Right ventricle myocardium inferior (tissue), 1 donor: ENCODE measurements at regions of chr4 and their contacts with region 1.

Region 1: DNA sequence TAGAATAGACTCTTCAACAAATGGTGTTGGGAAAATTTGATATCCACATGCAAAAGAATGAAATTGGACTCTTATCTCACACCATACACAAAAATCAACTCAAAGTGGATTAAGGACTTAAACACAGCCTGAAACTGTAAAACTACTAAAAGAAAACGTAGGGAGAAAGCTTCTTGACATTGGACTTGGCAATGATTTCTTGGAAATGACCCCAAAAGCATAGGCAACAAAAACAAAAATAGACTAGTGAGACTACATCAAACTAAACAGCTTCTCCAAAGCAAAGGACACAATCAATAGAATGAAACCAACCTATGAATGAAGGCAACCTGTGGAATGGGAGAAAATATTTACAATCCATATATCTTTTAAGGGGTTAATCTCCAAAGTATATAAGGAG is 94.7 kb upstream of the INTU start:
- DNase-seq: no peak
- ATAC-seq: no peak

Region 2: GRCh38 chr4:127196655-127197352 is 341.2 kb before region 1 on chr4:
- intact Hi-C with region 1: loop called (anchors 5 kb)
- DNase-seq: peak; percentile 61
- ATAC-seq: peak; percentile 95

Region 3: GRCh38 chr4:127446427-127446885 is 91.6 kb before region 1 on chr4:
- intact Hi-C with region 1: no loop called
- DNase-seq: no peak
- ATAC-seq: no peak

Region 4: GRCh38 chr4:127479031-127479622 is 58.9 kb before region 1 on chr4:
- intact Hi-C with region 1: loop called (anchors 2 kb)
- DNase-seq: no peak
- ATAC-seq: no peak

Region 5: DNA sequence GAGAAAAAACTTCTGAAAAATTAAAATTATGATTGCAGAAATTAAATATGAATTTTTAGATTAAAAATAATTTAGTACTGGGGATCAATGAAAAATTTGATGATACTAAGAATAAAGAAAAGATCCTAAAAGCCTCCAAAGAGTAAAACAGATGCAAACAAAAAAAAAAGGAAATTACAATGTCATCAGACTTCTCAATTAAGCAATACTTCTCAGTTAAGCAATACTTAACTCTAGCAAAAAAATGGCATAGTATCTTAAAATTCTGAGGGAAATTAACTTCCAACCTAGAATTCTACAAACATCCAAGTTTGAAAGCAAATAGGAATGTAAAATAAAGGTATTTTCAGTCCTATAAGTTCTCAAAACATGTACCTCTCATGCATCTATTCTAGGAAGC is 46.4 kb before region 1 on chr4:
- intact Hi-C with region 1: no loop called
- DNase-seq: no peak
- ATAC-seq: no peak